H1 (cell line): ENCODE measurements at regions of chr6 and their contacts with region 1.

Region 1: DNA sequence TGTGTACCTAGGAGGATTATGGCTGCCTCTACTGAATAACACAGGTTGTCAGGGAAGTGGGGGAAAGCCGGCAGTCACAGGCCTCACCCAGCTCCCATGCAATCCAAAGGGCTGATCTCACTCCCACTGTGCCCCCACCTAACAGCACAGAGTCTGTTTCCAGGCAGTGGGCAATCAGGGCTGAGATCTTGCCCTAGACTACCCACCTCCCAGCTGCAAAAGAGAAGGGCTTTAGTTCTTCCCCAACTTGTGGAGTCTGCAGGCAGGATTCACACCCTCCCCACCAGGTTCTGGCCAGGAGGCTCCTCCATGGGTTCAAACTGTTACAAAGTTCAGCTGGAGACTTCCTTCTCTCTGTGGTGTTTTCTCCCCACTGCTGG is 66.0 kb upstream of the OLIG3 start:
- DNase-seq: no peak
- H3K4me3 ChIP-seq: no peak overlapping the region
- H3K27ac ChIP-seq: no peak overlapping the region
- H3K4me1 ChIP-seq: no peaks in the 10 kb centered on the region
- H3K27me3 ChIP-seq: no peaks in the 10 kb centered on the region
- CTCF ChIP-seq: no peak
- EP300 ChIP-seq: no peak
- POLR2A ChIP-seq: no peak
- RAD21 ChIP-seq: no peak

Region 2: GRCh38 chr6:137518386-137518983 is 41.7 kb before region 1 on chr6:
- CTCF ChIA-PET with region 1: interaction called, 10 read pairs
- POLR2A ChIA-PET with region 1: no interaction called
- DNase-seq: no peak
- H3K4me3 ChIP-seq: peak overlapping the region in 1 of 4 experiments; percentile 15; a peak in 1 of 8 replicates
- H3K27ac ChIP-seq: no peak overlapping the region
- H3K4me1 ChIP-seq: peaks cover 4 to 20% (median 14%) of the 10 kb centered on the region in 4 experiments; a peak in 6 of 7 replicates
- H3K27me3 ChIP-seq: peaks cover 0 to 3% (median 0%) of the 10 kb centered on the region in 4 experiments; a peak in 3 of 7 replicates
- CTCF ChIP-seq: no peak
- EP300 ChIP-seq: no peak
- POLR2A ChIP-seq: no peak
- RAD21 ChIP-seq: no peak

Region 3: DNA sequence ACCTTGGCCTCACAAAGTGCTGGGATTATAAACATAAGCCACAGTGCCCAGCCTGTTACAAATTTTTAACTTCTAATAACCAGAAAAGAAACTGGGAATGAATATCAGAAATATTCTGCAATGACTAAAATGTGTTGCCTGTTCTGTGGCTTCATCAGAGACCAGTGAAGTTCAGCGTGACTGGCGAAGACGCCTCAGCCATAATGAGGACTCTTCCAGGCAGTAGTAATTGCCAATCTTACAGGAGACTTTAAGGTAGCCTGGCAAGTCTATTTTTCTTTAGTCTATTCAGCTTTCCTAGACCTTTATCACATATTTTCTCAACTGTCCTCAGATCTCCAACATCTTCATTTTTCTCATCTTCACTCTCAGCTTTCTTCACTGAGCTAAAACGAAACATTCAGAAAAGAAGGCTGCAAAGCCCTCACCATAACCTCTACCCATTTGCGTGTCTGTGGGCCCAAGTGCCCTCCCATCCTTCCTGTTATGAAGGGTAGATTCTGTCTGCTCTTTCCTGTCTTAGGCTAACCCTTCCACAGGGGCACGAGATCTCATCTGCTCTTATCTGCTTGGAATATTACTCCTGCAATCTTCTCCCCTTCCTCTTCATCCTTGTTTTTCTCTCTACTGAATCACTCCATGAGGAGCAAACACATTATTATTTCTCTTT is 23.9 kb before region 1 on chr6:
- CTCF ChIA-PET with region 1: interaction called, 20 read pairs
- POLR2A ChIA-PET with region 1: no interaction called
- DNase-seq: no peak
- H3K4me3 ChIP-seq: no peak overlapping the region
- H3K27ac ChIP-seq: no peak overlapping the region
- H3K4me1 ChIP-seq: no peaks in the 10 kb centered on the region; a peak in 1 of 7 replicates
- H3K27me3 ChIP-seq: no peaks in the 10 kb centered on the region
- CTCF ChIP-seq: no peak
- EP300 ChIP-seq: no peak
- POLR2A ChIP-seq: no peak
- RAD21 ChIP-seq: no peak

Region 4: DNA sequence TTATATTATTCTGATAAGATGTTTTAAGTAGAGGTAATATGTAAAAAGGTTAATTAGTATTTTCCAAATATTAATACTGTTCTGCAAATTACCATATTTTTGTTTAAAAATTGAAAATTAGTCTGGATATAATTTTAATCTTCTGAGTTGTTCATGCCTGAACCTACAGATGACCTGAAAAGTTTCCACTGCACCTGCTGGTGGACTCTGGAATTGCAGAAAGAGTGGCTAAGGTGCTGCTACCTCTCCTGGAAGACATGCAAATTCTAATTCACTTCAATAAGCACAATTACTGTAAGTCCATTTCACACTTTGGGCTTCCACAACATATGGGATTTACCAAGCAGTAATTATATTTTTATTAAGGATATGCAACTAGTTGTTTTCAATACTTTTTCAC is 11.7 kb after region 1 on chr6:
- CTCF ChIA-PET with region 1: interaction called, 32 read pairs
- POLR2A ChIA-PET with region 1: no interaction called
- DNase-seq: peak in 1 of 2 experiments; percentile 86
- H3K4me3 ChIP-seq: no peak overlapping the region
- H3K27ac ChIP-seq: no peak overlapping the region
- H3K4me1 ChIP-seq: no peaks in the 10 kb centered on the region
- H3K27me3 ChIP-seq: no peaks in the 10 kb centered on the region
- CTCF ChIP-seq: peak in 2 of 3 experiments; percentile 53 to 72; a peak in 3 of 4 replicates
- EP300 ChIP-seq: no peak
- POLR2A ChIP-seq: no peak
- RAD21 ChIP-seq: peak in 1 of 2 experiments; percentile 36; a peak in 2 of 4 replicates